Mammary epithelial cell (primary cell): ENCODE measurements at regions of chr17 and their contacts with region 1.

Region 1: DNA sequence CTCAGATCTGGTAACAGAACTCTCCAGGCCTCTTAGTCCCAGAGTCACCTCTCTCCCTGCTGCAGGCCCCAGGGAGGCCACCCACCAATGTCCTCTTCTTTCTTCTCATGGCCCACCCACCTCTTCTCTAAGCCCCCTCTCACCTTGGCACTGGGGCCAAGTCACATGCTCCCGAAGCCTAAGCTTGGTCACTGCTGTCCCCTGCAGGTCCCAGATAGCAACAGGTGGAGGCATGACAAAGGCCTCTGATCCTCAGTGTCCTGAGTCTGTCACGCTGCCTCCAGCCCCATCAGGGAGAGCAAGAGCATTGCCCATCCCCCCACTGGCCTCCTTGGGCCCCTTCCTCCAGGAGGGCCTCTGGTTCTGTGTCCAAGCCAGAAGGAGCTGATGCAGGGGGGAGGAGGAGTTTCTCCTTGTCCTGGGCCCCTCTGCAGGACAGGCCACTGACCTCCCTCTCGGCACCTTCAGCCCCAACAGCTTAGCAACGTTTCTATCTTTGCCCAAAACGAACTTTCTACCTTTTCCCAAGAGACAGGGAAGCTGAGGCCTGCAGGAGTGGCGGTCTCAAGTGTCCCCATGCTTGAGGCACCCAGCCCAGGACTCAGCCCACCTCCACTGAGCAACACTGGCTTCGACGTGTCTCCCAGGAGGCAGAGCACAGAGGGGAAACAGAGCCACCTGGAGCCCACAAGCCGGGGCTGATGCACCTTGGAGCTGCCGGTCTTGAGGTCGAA is 8.6 kb downstream of the P2RX1 start:
- DNase-seq: no peak
- H3K4me3 ChIP-seq: no peak overlapping the region
- H3K27ac ChIP-seq: no peak overlapping the region
- H3K4me1 ChIP-seq: no peaks in the 10 kb centered on the region
- H3K27me3 ChIP-seq: no peaks in the 10 kb centered on the region
- CTCF ChIP-seq: peak in 1 of 2 donors; percentile 49

Region 2: GRCh38 chr17:3812771-3813170 is 94.9 kb before region 1 on chr17:
- CTCF ChIA-PET with region 1: no interaction called
- dilution Hi-C with region 1: loop called (anchors 5 kb)
- in situ Hi-C with region 1: no loop called
- intact Hi-C with region 1: no loop called
- DNase-seq: no peak
- H3K4me3 ChIP-seq: no peak overlapping the region
- H3K27ac ChIP-seq: no peak overlapping the region
- H3K4me1 ChIP-seq: peaks cover 19% of the 10 kb centered on the region
- H3K27me3 ChIP-seq: no peaks in the 10 kb centered on the region
- CTCF ChIP-seq: no peak

Region 3: DNA sequence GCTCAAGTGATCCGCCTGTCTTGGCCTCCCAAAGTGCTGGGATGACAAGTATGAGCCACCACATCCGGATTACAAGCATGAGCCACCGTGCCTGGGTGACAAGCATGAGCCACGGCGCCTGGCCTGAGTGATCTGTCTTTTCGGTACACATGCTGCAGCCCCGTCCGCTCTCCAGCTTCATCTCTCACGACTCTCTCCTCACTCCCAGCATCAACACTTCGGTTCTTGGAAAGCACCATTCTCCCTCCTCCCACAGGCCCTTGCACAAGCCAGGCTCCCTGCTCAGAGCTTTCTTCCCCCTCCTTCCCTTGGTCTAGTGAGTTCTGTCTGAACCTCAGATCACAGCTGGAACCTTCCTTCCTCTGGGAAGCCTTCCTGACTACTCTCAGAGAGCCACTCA is 55.1 kb before region 1 on chr17:
- CTCF ChIA-PET with region 1: no interaction called
- dilution Hi-C with region 1: loop called (anchors 5 kb)
- in situ Hi-C with region 1: no loop called
- intact Hi-C with region 1: no loop called
- DNase-seq: no peak
- H3K4me3 ChIP-seq: no peak overlapping the region
- H3K27ac ChIP-seq: no peak overlapping the region
- H3K4me1 ChIP-seq: peaks cover 3% of the 10 kb centered on the region
- H3K27me3 ChIP-seq: no peaks in the 10 kb centered on the region
- CTCF ChIP-seq: no peak

Region 4: DNA sequence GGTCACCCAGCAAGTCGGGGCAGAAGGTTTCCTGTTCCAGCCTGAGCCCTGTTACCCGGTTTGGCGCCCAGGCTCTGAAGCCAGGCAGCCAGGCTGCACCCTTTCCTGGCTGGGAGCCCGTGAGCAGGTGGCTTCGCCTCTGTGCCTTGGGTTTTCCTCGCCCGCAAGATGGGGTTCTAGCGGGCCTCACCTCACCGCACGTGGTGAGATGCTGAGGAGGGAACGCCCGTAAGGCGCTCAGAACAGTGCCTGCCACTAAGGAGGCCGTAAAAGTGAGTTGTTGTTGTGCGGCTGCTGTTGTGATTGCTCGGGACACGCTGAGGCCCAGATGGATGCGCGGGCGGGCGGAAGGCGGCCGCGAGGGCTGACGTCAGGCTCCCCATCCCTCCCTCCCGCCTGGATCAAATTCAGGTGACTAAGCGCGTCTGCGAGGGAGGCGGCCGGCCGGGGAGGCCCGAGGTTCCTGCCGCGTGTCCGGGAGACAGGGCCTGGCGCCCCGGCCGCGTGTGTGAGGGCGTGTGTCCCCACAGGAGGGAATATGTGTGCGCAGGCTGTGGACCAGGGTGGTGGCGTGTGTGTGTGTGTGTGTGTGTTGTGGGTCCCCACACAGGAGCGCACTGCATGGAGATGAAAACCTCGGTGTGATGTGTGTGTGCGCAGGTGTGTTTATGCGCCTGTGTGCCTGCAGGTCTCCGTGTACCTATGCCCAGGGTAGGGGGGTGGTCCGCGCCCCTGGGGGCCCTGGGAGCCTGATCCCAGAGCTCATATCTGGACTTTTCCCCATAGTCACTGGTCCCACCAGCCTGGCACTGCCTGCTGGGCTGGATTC is 19.1 kb before region 1 on chr17:
- CTCF ChIA-PET with region 1: interaction called, 10 read pairs
- dilution Hi-C with region 1: no loop called
- in situ Hi-C with region 1: no loop called
- intact Hi-C with region 1: no loop called
- DNase-seq: peak; percentile 81
- H3K4me3 ChIP-seq: no peak overlapping the region
- H3K27ac ChIP-seq: peak overlapping the region; percentile 45
- H3K4me1 ChIP-seq: peaks cover 50% of the 10 kb centered on the region
- H3K27me3 ChIP-seq: no peaks in the 10 kb centered on the region
- CTCF ChIP-seq: no peak

Region 5: DNA sequence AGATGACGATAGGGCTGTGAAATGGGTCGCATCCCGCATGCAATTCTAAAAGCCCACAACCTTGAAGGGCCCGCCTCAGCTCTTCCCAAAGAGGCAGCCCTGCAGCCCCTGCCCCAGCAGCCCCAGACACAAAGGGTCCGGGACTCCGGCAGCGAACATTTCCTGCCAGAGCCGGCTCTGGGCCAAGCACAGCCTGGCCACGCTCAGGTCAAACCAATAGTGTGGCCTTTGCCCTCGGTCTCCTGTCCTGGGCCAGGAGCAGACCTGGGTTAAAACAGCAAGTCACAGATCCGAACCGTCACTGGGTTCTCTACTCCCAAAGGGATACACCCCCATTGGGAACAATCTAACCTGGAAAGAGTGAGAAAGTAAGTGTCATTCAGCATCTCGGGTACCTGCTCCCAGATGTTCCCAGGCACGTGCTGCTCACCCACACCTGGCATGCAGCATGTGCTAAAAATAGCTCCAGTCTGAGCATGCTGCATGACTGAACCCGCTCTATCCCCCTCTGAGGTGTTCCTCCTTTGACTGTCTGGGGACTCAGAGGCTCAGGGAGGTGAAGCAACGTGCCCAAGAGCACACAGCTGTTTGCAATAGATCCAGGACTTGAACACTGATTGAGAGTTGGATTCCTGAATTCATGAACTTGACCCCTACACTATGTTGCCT is 78.8 kb after region 1 on chr17:
- CTCF ChIA-PET with region 1: no interaction called
- dilution Hi-C with region 1: no loop called
- in situ Hi-C with region 1: no loop called
- intact Hi-C with region 1: no loop called
- DNase-seq: peak; percentile 14
- H3K4me3 ChIP-seq: no peak overlapping the region
- H3K27ac ChIP-seq: no peak overlapping the region
- H3K4me1 ChIP-seq: no peaks in the 10 kb centered on the region
- H3K27me3 ChIP-seq: no peaks in the 10 kb centered on the region
- CTCF ChIP-seq: no peak

Region 6: GRCh38 chr17:4004517-4005295 is 97.1 kb after region 1 on chr17:
- CTCF ChIA-PET with region 1: no interaction called
- dilution Hi-C with region 1: loop called (anchors 5 kb)
- in situ Hi-C with region 1: no loop called
- intact Hi-C with region 1: no loop called
- DNase-seq: no peak
- H3K4me3 ChIP-seq: no peak overlapping the region
- H3K27ac ChIP-seq: no peak overlapping the region
- H3K4me1 ChIP-seq: no peaks in the 10 kb centered on the region
- H3K27me3 ChIP-seq: no peaks in the 10 kb centered on the region
- CTCF ChIP-seq: peak; percentile 59 to 72

Region 7: GRCh38 chr17:4017377-4017776 is 109.7 kb after region 1 on chr17:
- CTCF ChIA-PET with region 1: no interaction called
- dilution Hi-C with region 1: no loop called
- in situ Hi-C with region 1: no loop called
- intact Hi-C with region 1: no loop called
- DNase-seq: no peak
- H3K4me3 ChIP-seq: no peak overlapping the region
- H3K27ac ChIP-seq: no peak overlapping the region
- H3K4me1 ChIP-seq: no peaks in the 10 kb centered on the region
- H3K27me3 ChIP-seq: no peaks in the 10 kb centered on the region
- CTCF ChIP-seq: no peak

Region 8: DNA sequence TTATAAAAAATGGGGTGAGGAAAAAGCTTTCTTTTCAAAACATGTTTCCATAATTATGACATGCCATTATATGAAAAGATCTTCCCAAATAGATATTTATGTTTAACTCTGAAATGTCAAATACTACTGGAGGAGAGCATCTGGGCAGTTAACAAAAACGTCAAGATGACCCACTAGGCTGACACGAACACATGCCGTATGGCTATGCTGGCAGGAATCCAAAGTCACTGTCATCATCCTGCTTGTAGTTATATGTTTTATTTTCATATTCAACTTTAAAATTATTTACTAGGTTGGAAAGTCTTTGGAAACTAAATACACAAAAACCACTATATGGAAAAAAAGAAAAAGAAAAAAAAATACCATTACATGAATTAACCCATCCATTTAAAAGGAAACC is 328.8 kb after region 1 on chr17:
- CTCF ChIA-PET with region 1: no interaction called
- dilution Hi-C with region 1: no loop called
- in situ Hi-C with region 1: no loop called
- intact Hi-C with region 1: no loop called
- DNase-seq: no peak
- H3K4me3 ChIP-seq: no peak overlapping the region
- H3K27ac ChIP-seq: no peak overlapping the region
- H3K4me1 ChIP-seq: peaks cover 15% of the 10 kb centered on the region
- H3K27me3 ChIP-seq: no peaks in the 10 kb centered on the region
- CTCF ChIP-seq: no peak